Breast epithelium (tissue), 4 donors: ENCODE measurements at regions of chr3 and their contacts with region 1.

Region 1: DNA sequence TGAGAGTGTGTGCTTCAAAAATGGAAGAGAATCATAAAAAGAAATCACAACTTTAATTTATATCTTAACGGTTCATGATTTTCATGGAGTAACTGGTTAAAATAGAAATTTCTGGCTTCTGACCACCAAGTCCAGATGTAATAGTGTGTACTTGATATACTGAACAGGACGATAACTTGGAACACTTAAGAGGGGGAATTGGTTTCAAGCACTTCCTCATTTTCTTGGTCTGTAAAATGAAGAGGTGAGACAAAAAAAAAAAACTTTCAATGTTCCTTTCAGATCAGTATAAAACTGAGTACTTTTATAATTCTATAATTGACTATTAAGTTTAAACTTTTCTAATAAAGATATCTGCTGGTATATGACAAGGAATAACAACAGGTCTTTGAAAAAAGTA is 64.0 kb upstream of the TRA2B start:
- DNase-seq: no peak
- H3K4me3 ChIP-seq: no peak overlapping the region
- H3K27ac ChIP-seq: no peak overlapping the region
- H3K4me1 ChIP-seq: no peaks in the 10 kb centered on the region
- H3K27me3 ChIP-seq: no peaks in the 10 kb centered on the region
- CTCF ChIP-seq: no peak
- POLR2A ChIP-seq: no peak

Region 2: DNA sequence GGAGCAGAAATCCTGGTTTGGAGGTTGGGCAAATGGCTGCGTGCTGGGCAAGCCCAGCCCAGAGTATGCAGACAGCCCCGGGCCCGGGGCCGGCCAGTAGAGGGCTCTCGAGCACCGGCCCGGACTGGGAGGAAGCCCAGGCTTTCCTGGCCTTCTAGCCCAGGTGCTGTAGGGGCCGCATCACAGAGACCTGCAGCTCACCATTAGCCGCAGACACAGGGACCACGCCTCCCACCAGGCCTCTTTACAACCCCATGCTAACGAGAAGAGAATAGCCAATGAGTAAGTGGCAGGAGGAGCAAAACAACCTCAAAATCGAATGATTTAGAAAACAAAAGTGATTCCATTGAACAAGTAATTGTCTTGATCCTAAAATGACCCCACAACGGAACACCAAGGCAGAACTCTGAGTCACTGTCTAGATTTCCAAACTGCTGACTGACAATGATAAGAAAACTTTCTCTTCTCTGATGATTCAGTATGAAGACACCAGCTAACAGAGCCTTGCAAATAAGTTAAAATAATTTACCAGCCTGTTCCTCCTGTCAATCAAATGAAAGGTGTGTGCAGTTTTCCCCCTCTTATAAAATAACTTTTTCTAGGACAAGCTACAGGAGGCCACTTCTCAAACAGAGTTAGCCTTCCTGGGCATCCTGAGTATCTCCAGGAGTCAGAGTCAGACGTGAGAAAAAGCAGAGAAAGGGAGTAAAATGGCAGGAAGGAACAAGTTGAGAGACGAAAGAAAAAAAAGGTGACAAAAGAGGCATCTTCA is 258.0 kb after region 1 on chr3:
- intact Hi-C with region 1: loop called (anchors 2 kb)
- DNase-seq: peak; percentile 36 to 63
- H3K4me3 ChIP-seq: no peak overlapping the region
- H3K27ac ChIP-seq: no peak overlapping the region
- H3K4me1 ChIP-seq: no peaks in the 10 kb centered on the region
- H3K27me3 ChIP-seq: no peaks in the 10 kb centered on the region
- CTCF ChIP-seq: peak in 2 of 3 donors; percentile 47 to 58
- POLR2A ChIP-seq: no peak